Sigmoid colon (tissue), 7 donors: ENCODE measurements at regions of chr1 and their contacts with region 1.

Region 1: DNA sequence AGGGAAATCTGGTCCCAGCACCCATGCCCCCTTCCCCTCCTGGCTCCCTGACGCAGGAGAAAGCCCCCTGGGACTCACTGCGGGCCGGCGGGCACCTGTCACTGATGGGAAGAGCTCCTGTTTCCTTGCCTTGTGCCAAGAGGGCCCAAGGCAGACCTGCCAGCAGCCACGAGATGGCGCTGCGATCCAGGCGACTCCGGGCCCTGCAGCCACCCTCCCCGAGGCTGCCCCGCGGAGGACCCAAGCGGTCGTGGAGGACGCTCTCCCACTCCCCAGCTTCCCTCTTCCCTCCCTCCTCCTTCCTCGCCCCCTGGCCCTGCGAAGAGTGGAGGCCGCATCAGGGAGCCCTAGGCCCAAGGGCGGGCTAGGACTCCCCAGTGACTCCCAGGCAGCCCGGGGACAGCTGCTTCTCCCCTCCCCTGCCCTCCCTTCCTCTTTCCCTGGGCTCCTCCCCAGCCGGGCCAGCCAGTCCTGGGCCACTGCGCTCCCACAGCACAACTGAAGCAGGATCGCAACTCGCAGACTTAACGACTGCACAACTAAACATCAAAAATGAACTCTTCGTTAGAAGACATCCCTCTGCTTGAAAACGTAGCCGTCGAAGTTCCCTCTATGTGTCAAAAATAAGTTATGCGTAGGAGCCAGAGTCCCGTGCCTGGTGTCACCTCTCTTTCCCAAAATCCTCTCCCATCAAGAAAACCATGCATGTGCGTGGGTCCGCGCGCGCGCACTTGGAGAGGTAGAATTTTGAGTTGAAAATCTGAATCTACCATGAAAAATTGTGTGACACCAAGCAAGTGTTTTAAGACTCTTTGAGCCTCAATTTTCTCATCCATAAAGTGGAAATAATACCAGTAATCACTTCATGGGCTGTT is 34.2 kb downstream of the BATF3 start:
- DNase-seq: peak; percentile 90
- H3K4me3 ChIP-seq: peak overlapping the region; percentile 36 to 64 (median 57)
- H3K27ac ChIP-seq: peak overlapping the region; percentile 59 to 84 (median 70)
- H3K4me1 ChIP-seq: peaks cover 0 to 39% (median 25%) of the 10 kb centered on the region in 4 donors
- H3K27me3 ChIP-seq: no peaks in the 10 kb centered on the region
- CTCF ChIP-seq: peak; percentile 83 to 95 (median 94)
- EP300 ChIP-seq: no peak
- POLR2A ChIP-seq: no peak

Region 2: GRCh38 chr1:212608209-212608955 is 57.1 kb before region 1 on chr1 and contains the start of gene ATF3:
- intact Hi-C with region 1: loop called (anchors 5 kb)
- DNase-seq: peak; percentile 100
- H3K4me3 ChIP-seq: peak within 1 kb of the TSS; percentile 80 to 88 (median 81)
- H3K27ac ChIP-seq: peak within 1 kb of the TSS; percentile 97 to 99 (median 99)
- H3K4me1 ChIP-seq: peaks cover 0 to 54% (median 38%) of the 10 kb centered on the region in 4 donors
- H3K27me3 ChIP-seq: peaks cover 12 to 39% (median 34%) of the 10 kb centered on the region in 3 donors
- CTCF ChIP-seq: no peak
- EP300 ChIP-seq: peak; percentile 24 to 67 (median 40)
- POLR2A ChIP-seq: peak; percentile 98
- total RNA-seq, gene ATF3: 3.2 to 32.0 (median 11.8) TPM

Region 3: GRCh38 chr1:212688341-212689047 is 23.0 kb after region 1 on chr1:
- intact Hi-C with region 1: no loop called
- DNase-seq: no peak
- H3K4me3 ChIP-seq: no peak overlapping the region
- H3K27ac ChIP-seq: no peak overlapping the region
- H3K4me1 ChIP-seq: no peaks in the 10 kb centered on the region
- H3K27me3 ChIP-seq: peaks cover 0 to 16% (median 6%) of the 10 kb centered on the region in 3 donors
- CTCF ChIP-seq: no peak
- EP300 ChIP-seq: no peak
- POLR2A ChIP-seq: no peak

Region 4: DNA sequence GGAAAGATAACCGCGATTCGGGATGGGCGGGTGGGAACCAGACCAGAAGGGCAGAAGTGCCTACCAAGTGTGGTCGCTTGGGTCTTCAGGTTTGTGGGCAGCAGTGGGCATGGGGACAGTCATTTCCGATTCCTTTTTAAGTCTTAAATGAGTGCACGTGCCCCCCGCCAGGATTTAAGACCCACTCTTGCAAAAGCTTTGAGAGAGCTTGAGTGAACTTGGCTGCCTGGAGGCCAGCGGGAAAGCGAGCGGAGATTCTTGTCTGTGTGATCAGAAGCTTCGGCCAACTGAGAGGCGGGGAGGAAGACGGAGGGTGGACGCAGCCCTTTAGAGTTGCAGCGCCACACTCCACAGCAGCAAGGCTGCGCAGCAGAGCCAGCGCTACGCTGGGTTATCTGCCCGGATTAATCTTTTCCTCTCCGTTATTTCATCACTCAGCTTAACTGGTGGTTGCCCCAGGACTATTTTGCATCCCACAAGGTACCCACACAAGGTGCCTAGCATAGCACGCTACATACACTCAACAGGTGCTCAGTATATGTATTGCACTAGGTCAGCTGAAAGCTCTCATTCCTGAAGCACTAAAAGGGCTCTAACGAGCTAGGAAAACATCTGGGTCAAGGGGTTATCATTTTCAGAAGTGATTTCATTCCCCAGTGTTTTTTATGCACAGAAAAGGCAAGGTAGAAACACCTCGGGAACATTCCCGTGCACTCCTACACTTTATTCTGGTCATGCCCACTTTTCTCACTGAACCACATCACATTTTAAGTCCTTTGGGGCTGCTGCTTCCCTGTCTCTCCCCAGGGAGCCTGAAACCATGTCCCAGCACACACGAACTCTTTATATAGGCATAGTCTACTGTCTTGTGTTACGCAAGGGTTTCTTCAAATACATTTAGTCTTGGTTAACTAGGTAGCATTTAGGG is 35.7 kb after region 1 on chr1:
- intact Hi-C with region 1: loop called (anchors 2 kb)
- DNase-seq: peak; percentile 83
- H3K4me3 ChIP-seq: peak overlapping the region; percentile 45 to 65 (median 55)
- H3K27ac ChIP-seq: peak overlapping the region; percentile 60 to 75 (median 72)
- H3K4me1 ChIP-seq: peaks cover 0 to 30% (median 24%) of the 10 kb centered on the region in 4 donors
- H3K27me3 ChIP-seq: no peaks in the 10 kb centered on the region
- CTCF ChIP-seq: no peak
- EP300 ChIP-seq: no peak
- POLR2A ChIP-seq: no peak

Region 5: GRCh38 chr1:212752252-212752933 is 86.9 kb after region 1 on chr1:
- intact Hi-C with region 1: loop called (anchors 1 kb)
- DNase-seq: no peak
- H3K4me3 ChIP-seq: peak overlapping the region in 2 of 4 donors; percentile 16 to 28
- H3K27ac ChIP-seq: peak overlapping the region; percentile 7 to 66 (median 44)
- H3K4me1 ChIP-seq: peaks cover 0 to 26% (median 8%) of the 10 kb centered on the region in 4 donors
- H3K27me3 ChIP-seq: no peaks in the 10 kb centered on the region
- CTCF ChIP-seq: no peak
- EP300 ChIP-seq: no peak
- POLR2A ChIP-seq: no peak

Region 6: DNA sequence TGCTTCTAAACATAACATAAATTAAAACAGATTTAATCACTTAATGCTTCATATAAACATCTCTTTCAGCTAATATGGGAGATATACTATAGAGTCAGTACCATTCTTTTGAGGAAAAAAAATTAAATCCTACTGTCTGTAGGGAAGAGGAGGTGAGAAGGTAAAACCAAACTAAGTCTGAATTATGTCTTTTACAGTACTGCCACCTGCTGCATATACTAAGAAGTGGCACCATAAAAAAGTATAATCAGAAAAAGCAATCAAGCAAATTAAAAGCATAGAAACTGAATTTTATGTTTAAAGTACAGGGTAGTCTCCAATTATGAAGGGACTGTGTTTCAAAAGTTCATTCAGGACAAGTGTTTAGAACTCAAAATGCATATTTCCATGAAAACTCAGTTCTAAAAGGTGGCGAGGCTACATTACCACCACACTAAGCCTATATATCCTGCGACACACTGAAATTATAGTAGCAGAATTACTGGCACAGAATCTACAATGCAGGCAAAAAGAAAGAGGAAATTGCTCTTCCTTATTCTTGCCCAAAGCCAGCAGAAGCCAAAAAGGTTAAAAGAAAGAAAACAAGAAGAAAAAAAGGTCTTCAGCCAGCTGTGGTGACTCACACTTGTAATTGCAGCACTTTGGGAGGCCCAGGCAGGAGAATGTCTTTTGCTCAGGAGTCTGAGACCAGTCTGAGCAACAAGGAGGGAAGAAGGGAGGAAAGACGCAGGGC is 117.1 kb after region 1 on chr1:
- intact Hi-C with region 1: loop called (anchors 2 kb)
- DNase-seq: no peak
- H3K4me3 ChIP-seq: no peak overlapping the region
- H3K27ac ChIP-seq: no peak overlapping the region
- H3K4me1 ChIP-seq: no peaks in the 10 kb centered on the region
- H3K27me3 ChIP-seq: no peaks in the 10 kb centered on the region
- CTCF ChIP-seq: peak in 3 of 4 experiments; percentile 7 to 57 (median 50)
- EP300 ChIP-seq: no peak
- POLR2A ChIP-seq: no peak

Region 7: GRCh38 chr1:212990276-212990675 is 324.8 kb after region 1 on chr1:
- intact Hi-C with region 1: loop called (anchors 5 kb)
- DNase-seq: no peak
- H3K4me3 ChIP-seq: no peak overlapping the region
- H3K27ac ChIP-seq: no peak overlapping the region
- H3K4me1 ChIP-seq: no peaks in the 10 kb centered on the region
- H3K27me3 ChIP-seq: no peaks in the 10 kb centered on the region
- CTCF ChIP-seq: no peak
- EP300 ChIP-seq: no peak
- POLR2A ChIP-seq: no peak